ENCODE measurements at regions of chr16 and their contacts with region 1.

Region 1: DNA sequence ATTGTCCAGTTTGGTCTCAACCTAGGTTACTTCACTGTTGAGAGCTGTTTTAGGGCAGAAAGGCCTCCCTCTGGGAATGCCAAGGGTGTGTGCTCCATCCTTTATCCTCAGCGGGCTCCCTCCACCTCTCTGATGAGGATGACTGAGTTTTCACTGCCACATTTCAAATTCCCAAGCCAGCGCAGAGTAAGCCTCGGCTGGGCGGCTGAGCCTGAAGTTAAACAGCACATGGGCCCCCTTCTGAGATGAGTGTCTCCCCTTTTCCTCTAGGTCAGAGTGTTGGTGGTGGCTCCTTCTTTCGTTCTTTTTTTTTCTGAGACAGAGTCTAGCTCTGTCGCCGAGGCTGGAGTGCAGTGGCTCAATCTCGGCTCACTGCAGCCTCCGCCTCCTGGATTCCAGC is 5.5 kb upstream of the GCSH start:
- DNase-seq: no peak
- ATAC-seq: no peak
- H3K4me3 ChIP-seq: no peak overlapping the region
- H3K4me3 Mint-ChIP-seq: no peak overlapping the region
- H3K27ac ChIP-seq: no peak overlapping the region
- H3K27ac Mint-ChIP-seq: no peak overlapping the region
- H3K4me1 ChIP-seq: peaks cover 2 to 5% of the 10 kb centered on the region in 2 experiments
- H3K4me1 Mint-ChIP-seq: peaks cover 0 to 2% (median 0%) of the 10 kb centered on the region in 3 donors
- H3K27me3 ChIP-seq: peaks cover 0 to 10% of the 10 kb centered on the region in 2 experiments
- H3K27me3 Mint-ChIP-seq: peaks cover 0 to 3% of the 10 kb centered on the region in 2 donors

Region 2: GRCh38 chr16:81060576-81061306 is 41.0 kb before region 1 on chr16:
- CTCF ChIA-PET with region 1: no interaction called
- POLR2A ChIA-PET with region 1: no interaction called
- DNase-seq: no peak
- ATAC-seq: no peak
- H3K4me3 ChIP-seq: no peak overlapping the region
- H3K4me3 Mint-ChIP-seq: no peak overlapping the region
- H3K27ac ChIP-seq: no peak overlapping the region
- H3K27ac Mint-ChIP-seq: no peak overlapping the region
- H3K4me1 ChIP-seq: no peaks in the 10 kb centered on the region
- H3K4me1 Mint-ChIP-seq: no peaks in the 10 kb centered on the region
- H3K27me3 ChIP-seq: no peaks in the 10 kb centered on the region
- H3K27me3 Mint-ChIP-seq: no peaks in the 10 kb centered on the region

Region 3: DNA sequence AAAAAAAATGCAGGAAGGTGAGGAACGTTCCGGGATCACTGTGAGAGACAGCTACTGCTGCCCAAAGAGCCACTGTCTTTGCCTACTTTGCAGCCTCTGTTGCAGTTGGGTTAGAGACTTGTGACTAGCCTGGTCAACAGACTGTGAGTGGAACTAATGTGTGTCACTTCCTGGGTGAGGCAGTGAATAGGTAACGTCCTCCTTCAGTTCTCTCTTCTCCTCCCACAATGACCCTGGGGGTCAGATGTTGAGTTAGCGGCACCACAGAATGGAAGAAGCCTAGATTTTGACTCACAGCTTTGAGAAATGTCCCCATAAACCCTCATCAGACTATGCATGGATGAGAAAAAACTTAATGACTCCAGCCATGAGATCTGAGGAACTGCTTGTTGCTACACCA is 29.9 kb before region 1 on chr16:
- CTCF ChIA-PET with region 1: interaction called in 1 of 2 experiments, 10 read pairs
- POLR2A ChIA-PET with region 1: interaction called in 1 of 2 experiments, 3 read pairs
- DNase-seq: no peak
- ATAC-seq: no peak
- H3K4me3 ChIP-seq: no peak overlapping the region
- H3K4me3 Mint-ChIP-seq: no peak overlapping the region
- H3K27ac ChIP-seq: no peak overlapping the region
- H3K27ac Mint-ChIP-seq: no peak overlapping the region
- H3K4me1 ChIP-seq: peaks cover 4% of the 10 kb centered on the region in 2 experiments
- H3K4me1 Mint-ChIP-seq: peaks cover 0 to 2% (median 0%) of the 10 kb centered on the region in 3 donors
- H3K27me3 ChIP-seq: no peaks in the 10 kb centered on the region
- H3K27me3 Mint-ChIP-seq: peaks cover 0 to 3% of the 10 kb centered on the region in 2 donors

Measured in T-cell (primary cell).